ENCODE measurements at regions of chr4 and their contacts with region 1.

Region 1: DNA sequence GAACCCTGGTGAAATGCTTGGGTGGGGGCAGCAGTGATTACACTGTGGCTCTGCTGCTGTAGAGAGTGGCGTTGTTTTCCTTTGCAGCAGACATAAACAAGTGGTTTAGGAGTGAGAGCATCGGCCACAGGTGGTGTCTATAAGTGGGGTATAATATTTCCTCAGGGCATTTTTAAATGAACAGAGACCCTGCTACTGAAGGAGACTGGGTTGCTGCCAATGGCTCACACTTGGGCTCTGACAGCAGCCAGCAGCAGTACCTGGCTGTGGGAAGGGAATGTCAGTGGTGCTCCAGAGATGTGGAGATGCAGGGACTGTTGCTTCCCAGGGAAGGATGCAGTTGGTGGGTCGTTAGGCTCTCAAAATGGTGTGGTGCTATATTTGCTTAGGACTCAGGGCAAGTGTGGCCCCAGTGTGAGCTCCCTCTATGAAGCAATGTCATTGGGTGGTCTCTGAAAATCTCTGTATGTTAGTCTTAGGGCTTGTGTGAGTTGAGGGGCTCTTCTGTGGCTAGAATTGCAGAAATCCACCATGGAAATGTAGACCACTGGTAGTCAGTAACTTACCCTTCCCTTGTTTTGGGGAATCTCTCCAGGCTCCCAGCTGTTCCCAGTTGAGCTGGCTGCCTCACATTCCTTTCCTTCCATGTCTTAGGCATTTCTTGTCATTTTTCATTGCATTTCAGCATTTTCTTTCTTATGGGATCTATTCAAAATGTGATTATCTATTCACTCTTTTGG is 1023.0 kb upstream of the GRID2 start:
- DNase-seq: no peak
- ATAC-seq: no peak
- H3K4me3 ChIP-seq: no peak overlapping the region
- H3K27ac ChIP-seq: no peak overlapping the region
- H3K4me1 ChIP-seq: no peaks in the 10 kb centered on the region
- H3K27me3 ChIP-seq: no peaks in the 10 kb centered on the region
- CTCF ChIP-seq: no peak

Region 2: GRCh38 chr4:90174611-90175133 is 1106.0 kb before region 1 on chr4:
- intact Hi-C with region 1: loop called in 1 of 2 experiments (anchors 5 kb)
- DNase-seq: no peak
- ATAC-seq: no peak
- H3K4me3 ChIP-seq: no peak overlapping the region
- H3K27ac ChIP-seq: no peak overlapping the region
- H3K4me1 ChIP-seq: no peaks in the 10 kb centered on the region
- H3K27me3 ChIP-seq: no peaks in the 10 kb centered on the region
- CTCF ChIP-seq: no peak

Region 3: GRCh38 chr4:90495936-90496335 is 784.8 kb before region 1 on chr4:
- intact Hi-C with region 1: no loop called
- DNase-seq: no peak
- ATAC-seq: no peak
- H3K4me3 ChIP-seq: no peak overlapping the region
- H3K27ac ChIP-seq: no peak overlapping the region
- H3K4me1 ChIP-seq: no peaks in the 10 kb centered on the region
- H3K27me3 ChIP-seq: no peaks in the 10 kb centered on the region
- CTCF ChIP-seq: no peak

Measured in psoas muscle (tissue), 8 donors.